ENCODE measurements at regions of chr5 and their contacts with region 1.

Region 1: DNA sequence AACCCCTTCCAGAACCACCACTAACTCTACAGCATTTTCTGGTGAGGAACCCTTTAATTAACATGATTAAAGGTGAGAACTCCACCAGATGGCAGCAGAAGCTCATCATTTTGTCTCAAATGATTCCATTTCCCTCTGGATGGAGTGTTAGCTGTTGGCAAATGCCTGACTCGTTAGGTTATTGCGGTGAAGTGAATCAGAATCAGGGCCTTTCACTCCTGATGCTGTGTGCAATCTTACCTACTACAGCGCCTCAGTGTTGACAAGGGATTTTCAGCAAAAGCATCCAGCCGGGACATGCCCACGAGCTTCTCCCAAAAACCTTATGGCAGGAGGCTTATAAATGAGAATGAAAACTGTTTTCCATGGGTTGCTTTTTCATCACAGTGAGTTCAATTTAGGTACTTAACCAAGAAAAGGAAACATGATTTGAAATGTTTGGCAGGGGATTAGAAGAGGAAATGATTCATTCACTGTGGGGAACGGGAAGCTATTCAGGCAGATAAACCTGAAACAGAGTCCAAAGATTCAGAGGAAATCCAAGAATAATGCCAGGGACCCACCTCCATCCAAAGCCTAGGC is 48.0 kb upstream of the CAST start:
- H3K4me3 ChIP-seq: no peak overlapping the region
- H3K27ac ChIP-seq: no peak overlapping the region
- H3K4me1 ChIP-seq: no peaks in the 10 kb centered on the region
- CTCF ChIP-seq: peak; percentile 71

Region 2: GRCh38 chr5:96265487-96265886 is 348.7 kb before region 1 on chr5:
- CTCF ChIA-PET with region 1: no interaction called
- POLR2A ChIA-PET with region 1: no interaction called
- H3K4me3 ChIP-seq: no peak overlapping the region
- H3K27ac ChIP-seq: no peak overlapping the region
- H3K4me1 ChIP-seq: no peaks in the 10 kb centered on the region
- CTCF ChIP-seq: no peak

Region 3: DNA sequence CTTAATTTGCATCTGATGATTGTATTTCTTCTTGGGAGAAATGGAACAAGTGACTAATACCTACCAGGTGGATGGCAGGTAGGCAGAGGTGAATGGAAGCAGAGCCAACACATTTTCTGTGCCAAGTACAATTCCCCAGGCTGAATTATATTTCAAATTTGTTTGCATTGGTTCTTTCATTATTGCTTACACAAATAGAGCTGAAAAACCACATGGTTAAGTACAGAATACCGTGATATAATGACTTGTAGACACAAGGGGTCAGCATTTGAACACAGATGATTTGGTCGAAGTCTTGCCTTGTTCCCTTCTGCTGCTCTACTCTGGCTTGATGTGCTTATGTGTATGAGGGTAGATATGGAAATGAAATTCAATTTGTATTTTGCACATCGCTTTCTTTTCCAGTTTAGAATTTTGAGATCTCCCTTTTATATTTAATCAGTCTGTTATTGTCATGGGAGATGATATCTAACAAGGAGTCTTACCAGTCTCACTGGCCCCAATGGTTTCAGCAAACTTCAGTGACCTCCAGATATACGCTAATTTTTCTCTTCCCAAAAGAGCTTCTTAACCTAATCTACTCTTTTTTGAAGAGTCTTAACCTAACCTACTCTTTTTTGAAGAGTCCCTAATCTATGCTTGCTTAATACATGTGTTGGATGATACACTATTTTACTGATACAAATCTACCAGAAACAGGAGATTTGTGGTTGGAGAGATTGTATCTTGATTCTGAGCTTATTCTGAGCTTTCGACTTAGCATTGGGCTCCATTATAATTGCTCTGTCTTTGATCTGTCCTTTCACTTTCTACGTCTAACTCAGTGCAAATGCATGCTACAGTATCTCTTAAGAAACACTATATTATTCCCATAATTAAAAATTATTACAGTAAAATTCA is 269.3 kb before region 1 on chr5:
- CTCF ChIA-PET with region 1: interaction called, 14 read pairs
- POLR2A ChIA-PET with region 1: no interaction called
- H3K4me3 ChIP-seq: no peak overlapping the region
- H3K27ac ChIP-seq: no peak overlapping the region
- H3K4me1 ChIP-seq: peaks cover 20% of the 10 kb centered on the region
- CTCF ChIP-seq: peak; percentile 51; the same call in 1 of the 2 replicates

Region 4: GRCh38 chr5:96503501-96504236 is 110.5 kb before region 1 on chr5:
- CTCF ChIA-PET with region 1: no interaction called
- POLR2A ChIA-PET with region 1: no interaction called
- H3K4me3 ChIP-seq: no peak overlapping the region
- H3K27ac ChIP-seq: no peak overlapping the region
- H3K4me1 ChIP-seq: no peaks in the 10 kb centered on the region
- CTCF ChIP-seq: no peak

Region 5: GRCh38 chr5:96662725-96663513 is 48.7 kb after region 1 on chr5:
- CTCF ChIA-PET with region 1: interaction called, 10 read pairs
- POLR2A ChIA-PET with region 1: interaction called, 3 read pairs
- H3K4me3 ChIP-seq: peak overlapping the region; percentile 66
- H3K27ac ChIP-seq: peak overlapping the region; percentile 92
- H3K4me1 ChIP-seq: no peaks in the 10 kb centered on the region; the same call in none of the 2 replicates
- CTCF ChIP-seq: peak; percentile 56; the same call in 1 of the 2 replicates

Region 6: DNA sequence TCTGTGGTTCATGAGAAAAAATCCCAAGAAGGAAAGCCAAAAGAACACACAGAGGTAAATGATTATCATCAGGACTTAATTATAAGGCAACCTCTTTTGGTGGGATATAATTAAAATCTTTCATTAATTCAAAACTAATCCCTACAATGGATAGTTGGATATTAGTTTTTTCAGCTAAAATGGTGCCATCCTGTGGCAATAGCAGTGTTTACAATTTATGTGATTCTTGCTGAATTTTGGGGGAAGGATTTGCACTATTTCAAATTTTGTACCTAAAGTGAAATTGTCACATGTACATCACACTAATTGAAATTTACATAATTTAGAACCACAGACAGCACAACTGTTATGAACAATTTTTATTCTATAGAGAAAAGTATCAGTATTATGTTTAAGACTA is 115.0 kb after region 1 on chr5:
- CTCF ChIA-PET with region 1: interaction called, 10 read pairs
- POLR2A ChIA-PET with region 1: no interaction called
- H3K4me3 ChIP-seq: no peak overlapping the region
- H3K27ac ChIP-seq: no peak overlapping the region
- H3K4me1 ChIP-seq: no peaks in the 10 kb centered on the region
- CTCF ChIP-seq: no peak

Region 7: GRCh38 chr5:97111616-97112015 is 497.4 kb after region 1 on chr5:
- CTCF ChIA-PET with region 1: no interaction called
- POLR2A ChIA-PET with region 1: no interaction called
- H3K4me3 ChIP-seq: no peak overlapping the region
- H3K27ac ChIP-seq: no peak overlapping the region
- H3K4me1 ChIP-seq: no peaks in the 10 kb centered on the region
- CTCF ChIP-seq: no peak

Region 8: DNA sequence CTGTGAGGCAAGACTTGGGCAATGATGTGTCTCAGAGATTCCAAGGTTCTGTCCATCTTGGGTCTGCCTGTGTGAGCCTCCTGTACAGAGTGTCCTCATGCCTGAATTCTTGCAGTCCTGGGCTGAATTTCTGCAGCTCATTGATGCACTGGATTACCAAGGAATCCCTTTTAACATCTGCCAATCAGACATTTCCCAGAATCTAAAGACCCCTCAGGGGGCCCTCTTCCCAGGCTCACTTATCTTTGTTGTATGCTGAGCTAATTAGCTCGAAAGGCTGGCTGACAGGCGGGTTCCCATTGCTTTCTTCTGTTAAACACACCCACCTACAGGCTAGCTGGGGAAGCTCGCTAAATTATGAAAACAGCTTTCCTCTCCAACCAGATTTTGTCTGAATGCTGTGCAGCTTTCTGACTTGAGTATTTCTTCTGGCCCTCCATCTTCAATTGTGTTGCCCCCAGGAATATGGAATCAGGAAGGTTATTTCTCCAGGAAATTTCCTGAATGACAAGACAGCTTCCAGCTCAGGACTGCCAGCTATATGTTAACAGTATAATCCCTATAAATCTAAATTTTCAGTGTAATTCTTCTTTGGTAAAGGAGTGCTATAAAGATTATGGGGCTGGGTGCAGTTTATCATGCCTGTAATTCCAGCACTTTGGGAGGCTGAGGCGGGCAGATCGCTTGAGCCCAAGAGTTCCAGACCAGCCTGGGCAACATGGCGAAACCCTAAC is 528.5 kb after region 1 on chr5 and contains the start of gene LIX1:
- CTCF ChIA-PET with region 1: interaction called, 15 read pairs
- POLR2A ChIA-PET with region 1: no interaction called
- H3K4me3 ChIP-seq: no peak within 1 kb of the TSS
- H3K27ac ChIP-seq: no peak within 1 kb of the TSS
- H3K4me1 ChIP-seq: peaks cover 11% of the 10 kb centered on the region
- CTCF ChIP-seq: peak; percentile 64; the same call in 1 of the 2 replicates